Activated naive CD4-positive, alpha-beta T cell treated with anti-CD3 and anti-CD28 coated beads for 36 hours (primary cell): ENCODE measurements at regions of chr1 and their contacts with region 1.

Region 1: DNA sequence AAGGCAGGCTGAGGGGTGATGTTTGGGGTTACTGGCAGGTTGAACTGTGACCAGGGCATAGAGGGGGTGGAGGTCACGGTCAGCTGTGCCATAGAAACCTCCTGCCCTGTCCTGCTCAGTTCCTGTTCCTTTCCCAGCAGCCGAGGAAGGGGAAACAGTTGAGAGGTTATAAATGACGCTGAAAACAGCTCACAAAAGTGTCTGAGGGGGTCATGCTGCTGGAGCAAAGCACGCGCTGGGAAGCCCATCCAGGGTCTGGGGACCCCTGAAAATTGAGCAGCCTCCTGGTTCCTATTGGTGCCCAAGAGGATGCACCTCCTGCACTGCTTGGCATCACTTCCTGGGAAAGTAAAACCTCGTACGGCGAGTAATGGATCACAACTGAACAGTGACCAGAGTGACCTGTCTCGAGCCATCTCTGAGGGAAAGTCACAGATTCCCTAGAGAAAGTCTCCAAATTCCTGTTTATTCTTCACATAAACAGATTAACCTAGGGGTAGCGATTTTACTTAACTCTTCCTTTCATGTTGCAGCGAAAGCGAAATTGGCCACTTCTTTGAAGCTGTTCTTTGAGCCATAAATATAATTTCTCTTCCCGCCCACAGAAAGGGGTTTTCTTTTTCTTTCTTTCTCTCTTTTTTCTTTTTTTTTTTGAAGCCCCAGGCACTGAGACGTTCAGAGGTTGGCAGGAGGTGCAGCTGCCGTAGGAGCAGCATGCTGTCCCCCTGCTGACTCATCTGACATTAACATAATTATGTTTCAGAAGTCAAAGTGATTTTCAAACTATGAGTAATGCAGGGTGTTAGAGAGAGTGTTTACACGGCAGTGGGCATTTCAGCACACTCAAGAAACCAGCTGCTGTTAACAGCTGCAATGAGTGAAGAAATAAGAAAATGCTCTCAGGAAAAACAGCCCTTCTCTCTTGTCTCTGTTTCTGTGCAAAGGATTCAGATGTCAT is 41.8 kb upstream of the ATF3 start:
- DNase-seq: peak; percentile 80
- H3K4me3 Mint-ChIP-seq: peak overlapping the region; percentile 78
- H3K27ac Mint-ChIP-seq: peak overlapping the region; percentile 88
- H3K4me1 Mint-ChIP-seq: peaks cover 32% of the 10 kb centered on the region
- H3K27me3 Mint-ChIP-seq: no peaks in the 10 kb centered on the region

Region 2: DNA sequence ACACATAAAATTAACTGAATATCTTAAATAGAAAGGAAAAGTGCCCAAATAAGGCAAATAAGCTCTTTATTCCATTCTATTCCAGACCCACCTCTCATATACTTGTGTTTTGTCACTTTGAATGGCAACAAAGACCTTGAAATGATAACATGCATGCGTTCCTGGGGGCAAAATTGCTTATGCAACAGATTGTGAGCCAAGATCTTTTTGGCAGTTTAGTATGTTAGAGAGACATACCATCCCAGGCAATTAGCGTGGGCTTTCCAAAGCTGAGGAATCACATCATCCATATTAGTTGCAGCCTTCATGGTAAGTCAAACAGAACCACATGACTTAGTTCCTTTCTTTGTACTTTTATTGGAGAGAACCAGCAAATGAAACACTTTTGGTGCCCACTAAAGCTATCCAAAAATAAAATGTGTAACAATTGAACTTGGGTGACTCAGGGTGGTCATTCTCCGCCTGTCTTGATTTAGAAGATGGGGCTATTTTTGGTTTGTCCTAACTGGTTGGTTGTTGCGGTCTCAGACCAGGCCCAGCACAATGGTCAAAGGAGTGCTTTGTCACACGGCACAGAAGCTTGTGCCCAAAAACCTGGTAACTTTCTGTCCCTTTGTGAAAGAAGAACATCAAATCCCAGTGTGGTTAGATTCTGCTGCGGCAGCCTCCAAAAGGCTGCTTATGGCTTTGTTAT is 26.9 kb before region 1 on chr1:
- CTCF ChIA-PET with region 1: no interaction called
- intact Hi-C with region 1: no loop called
- DNase-seq: no peak
- H3K4me3 Mint-ChIP-seq: no peak overlapping the region
- H3K27ac Mint-ChIP-seq: no peak overlapping the region
- H3K4me1 Mint-ChIP-seq: no peaks in the 10 kb centered on the region
- H3K27me3 Mint-ChIP-seq: peaks cover 3% of the 10 kb centered on the region

Region 3: DNA sequence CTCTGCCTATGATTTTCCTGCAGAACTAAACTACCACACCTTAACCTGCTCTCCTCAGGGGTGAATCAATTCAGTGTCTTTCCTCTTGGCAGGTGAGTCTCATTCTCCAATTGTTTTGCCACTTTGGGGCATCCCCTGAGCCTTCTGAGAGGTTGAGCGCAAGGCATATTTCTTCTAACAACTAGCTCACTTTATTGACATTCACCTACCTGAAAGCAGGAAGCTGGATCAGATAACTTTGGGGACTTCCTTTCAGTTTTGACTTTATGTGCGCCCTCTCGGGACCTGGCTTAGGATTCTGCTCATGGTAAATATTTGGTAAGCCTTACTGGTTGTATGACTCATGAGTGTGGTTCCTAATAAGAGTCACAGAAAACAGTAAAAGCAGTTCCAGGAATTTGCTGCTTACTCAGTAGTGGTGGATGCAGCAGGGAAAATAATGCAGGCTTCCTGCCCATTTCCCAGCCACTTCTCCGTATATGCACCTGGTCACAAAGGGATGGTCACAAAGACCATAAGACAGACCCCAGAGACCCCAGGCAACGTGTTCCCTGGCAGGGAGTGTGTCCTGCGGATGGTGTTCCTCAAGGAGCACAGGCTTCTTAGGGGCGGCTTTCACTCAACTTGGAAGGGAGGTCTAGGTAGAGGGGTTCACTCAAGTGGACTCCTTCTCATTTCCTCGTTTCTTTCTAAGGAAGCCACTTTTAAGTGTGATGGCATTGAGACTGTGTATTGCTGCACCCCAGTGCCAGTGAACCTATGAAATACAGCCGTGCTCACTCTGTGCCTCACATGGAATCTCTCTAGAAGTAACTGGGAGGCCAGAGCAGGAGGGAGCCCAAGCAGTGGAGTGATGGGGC is 154.8 kb after region 1 on chr1:
- CTCF ChIA-PET with region 1: no interaction called
- intact Hi-C with region 1: loop called (anchors 1 kb)
- DNase-seq: peak; percentile 71
- H3K4me3 Mint-ChIP-seq: no peak overlapping the region
- H3K27ac Mint-ChIP-seq: no peak overlapping the region
- H3K4me1 Mint-ChIP-seq: peaks cover 20% of the 10 kb centered on the region
- H3K27me3 Mint-ChIP-seq: no peaks in the 10 kb centered on the region

Region 4: DNA sequence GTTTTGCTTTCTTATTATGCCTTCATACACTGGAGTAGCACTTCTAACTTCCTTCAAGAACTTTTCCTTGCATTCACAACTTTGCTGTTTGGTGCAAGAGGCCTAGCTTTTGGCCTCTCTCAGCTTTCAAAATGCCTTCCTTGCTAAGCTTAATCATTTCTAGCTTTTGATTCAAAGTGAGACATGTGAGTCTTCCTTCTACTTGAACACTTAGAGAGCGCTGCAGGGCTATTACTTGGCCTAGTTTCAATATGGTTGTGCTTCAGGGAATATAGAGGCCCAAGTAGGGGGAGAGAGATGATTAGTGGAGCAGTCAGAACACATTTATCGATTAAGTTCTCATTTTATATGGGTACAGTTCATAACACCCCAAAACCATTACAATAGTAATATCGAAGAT is 436.5 kb after region 1 on chr1:
- CTCF ChIA-PET with region 1: no interaction called
- intact Hi-C with region 1: loop called (anchors 5 kb)
- DNase-seq: peak; percentile 49
- H3K4me3 Mint-ChIP-seq: no peak overlapping the region
- H3K27ac Mint-ChIP-seq: peak overlapping the region; percentile 67
- H3K4me1 Mint-ChIP-seq: peaks cover 10% of the 10 kb centered on the region
- H3K27me3 Mint-ChIP-seq: no peaks in the 10 kb centered on the region